ENCODE measurements at regions of chr11 and their contacts with region 1.

Region 1: GRCh38 chr11:107689317-107690202 is 22.3 kb downstream of the SLN start:
- DNase-seq: peak; percentile 66
- ATAC-seq: peak; percentile 84

Region 2: GRCh38 chr11:107247167-107247861 is 442.2 kb before region 1 on chr11:
- intact Hi-C with region 1: no loop called
- DNase-seq: no peak
- ATAC-seq: no peak

Region 3: GRCh38 chr11:107563702-107564101 is 125.9 kb before region 1 on chr11:
- intact Hi-C with region 1: loop called (anchors 5 kb)
- DNase-seq: no peak
- ATAC-seq: peak; percentile 21

Region 4: DNA sequence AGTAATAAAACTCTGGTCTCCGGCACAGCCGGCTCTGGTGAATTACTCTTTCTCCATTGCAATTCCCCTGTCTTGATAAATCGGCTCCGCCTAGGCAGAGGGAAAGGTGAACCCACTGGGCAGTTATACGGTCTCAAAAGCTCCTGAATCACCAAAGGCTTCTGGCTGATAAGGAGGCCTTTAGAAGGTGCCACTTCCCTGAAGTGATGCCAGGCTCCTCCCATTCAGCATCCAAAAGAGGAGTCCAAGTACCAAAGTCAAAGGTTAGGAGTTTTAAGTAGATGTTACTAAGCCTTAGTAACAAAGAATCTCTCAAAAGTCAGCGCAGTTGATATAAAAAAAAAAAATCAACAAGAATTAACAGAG is 112.2 kb before region 1 on chr11:
- intact Hi-C with region 1: loop called (anchors 2 kb)
- DNase-seq: no peak
- ATAC-seq: no peak

Region 5: DNA sequence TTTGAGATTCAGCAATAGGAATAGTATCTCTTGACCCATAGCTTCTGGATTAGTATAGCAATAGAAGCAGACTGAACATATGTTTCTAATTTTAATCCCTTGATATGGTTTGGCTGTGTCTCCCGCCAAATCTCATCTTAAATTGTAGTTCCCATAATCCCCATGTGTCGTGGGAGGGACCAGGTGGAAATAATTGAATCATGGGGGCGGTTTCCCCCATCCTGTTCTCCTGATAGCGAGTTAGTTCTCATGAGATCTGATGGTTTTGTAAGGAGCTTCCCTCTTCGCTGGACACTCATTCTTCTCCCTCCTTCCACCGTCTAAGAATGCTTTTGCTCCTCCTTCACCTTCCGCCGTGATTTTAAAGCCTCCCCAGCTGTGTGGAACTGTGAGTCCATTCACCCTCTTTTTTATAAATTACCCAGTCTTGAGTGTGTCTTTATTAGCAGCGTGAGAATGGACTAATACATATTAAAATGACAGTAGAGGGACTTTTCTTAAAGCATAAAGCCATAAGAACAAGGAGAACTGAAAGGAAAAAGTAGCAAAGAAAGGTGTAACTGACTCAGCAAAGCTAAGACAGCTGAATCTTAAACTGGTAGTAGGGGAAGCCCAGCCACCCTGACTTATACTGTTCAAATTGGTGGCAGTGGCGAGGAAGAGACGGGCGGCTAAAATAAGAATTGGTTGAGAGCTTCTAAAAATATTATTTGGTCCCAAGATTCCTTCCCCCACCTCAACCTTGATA is 42.6 kb after region 1 on chr11:
- intact Hi-C with region 1: no loop called
- DNase-seq: no peak
- ATAC-seq: no peak

Region 6: DNA sequence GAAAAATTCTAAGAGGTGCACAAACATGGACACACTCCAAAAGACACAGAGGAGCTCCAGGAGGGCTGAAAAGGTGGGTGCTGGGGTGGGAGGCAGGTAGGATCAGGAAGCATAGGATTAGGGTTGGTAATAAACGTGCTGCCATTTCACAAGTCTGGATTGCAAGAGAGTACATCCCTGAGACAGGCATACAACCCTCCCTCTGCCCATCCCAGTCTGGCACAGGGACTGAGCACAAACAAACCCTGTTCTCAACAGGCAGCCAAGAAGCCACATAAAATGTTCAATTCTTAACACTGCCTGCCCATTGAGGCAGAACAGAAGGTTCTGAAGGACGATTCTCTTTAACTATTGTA is 150.5 kb after region 1 on chr11:
- intact Hi-C with region 1: no loop called
- DNase-seq: no peak
- ATAC-seq: peak; percentile 66